ENCODE measurements at regions of chr1 and their contacts with region 1.

Region 1: DNA sequence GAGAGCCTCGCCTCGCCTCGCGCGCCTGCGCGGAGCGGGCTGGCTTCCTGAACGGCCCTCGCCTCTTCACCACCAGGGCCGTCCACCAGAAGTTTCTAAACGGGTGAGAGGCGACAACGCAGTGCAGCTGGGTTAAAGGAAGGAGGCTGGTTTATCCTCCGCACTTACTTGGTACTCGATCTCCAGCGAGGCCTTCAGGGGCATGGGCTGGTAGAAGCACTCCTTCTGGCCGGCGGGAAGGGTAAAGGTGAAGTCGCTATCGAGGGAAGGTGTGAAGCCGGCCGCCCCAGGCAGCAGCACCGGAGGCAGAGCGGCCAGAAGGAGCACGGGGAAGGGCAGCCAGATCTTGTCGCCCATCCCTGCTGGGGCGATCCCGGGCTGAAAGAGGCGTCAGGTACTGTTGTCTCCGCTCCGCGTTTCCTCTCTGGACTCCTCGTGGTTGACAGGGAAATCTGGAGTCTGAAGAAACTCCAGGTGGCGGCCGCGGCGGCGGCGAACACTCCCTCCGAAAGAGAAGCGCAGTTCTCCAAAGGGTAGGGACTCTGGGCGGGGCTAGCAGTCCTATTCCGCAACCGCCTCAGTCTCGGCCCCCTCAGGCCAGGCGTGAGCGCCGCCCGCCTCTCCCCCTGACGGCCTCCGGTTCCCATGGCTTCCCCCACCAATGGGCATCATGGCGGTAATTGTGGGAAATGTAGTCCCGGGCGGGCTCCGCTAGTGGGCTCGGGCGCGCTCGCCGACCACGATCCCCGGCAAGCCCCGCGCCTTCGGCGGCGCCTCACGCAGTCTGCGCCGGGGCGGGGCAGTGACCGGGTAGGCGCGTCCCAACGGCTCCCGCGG is at the start of gene TMED5:
- DNase-seq: peak; percentile 90 to 98 (median 95)
- ATAC-seq: peak; percentile 81
- H3K4me3 ChIP-seq: peak within 1 kb of the TSS; percentile 75 to 97
- H3K4me3 Mint-ChIP-seq: peak within 1 kb of the TSS; percentile 91
- H3K27ac ChIP-seq: peak within 1 kb of the TSS; percentile 83 to 98
- H3K27ac Mint-ChIP-seq: peak within 1 kb of the TSS; percentile 97
- H3K4me1 ChIP-seq: peaks cover 33% of the 10 kb centered on the region
- H3K4me1 Mint-ChIP-seq: peaks cover 49% of the 10 kb centered on the region
- H3K27me3 ChIP-seq: no peaks in the 10 kb centered on the region
- H3K27me3 Mint-ChIP-seq: no peaks in the 10 kb centered on the region
- CTCF ChIP-seq: peak; percentile 32
- total RNA-seq, gene TMED5: 38.3 to 38.8 TPM

Region 2: GRCh38 chr1:92080128-92080985 is 1099.7 kb before region 1 on chr1 and contains the start of gene BTBD8:
- CTCF ChIA-PET with region 1: no interaction called
- POLR2A ChIA-PET with region 1: no interaction called
- intact Hi-C with region 1: loop called in 1 of 2 experiments (anchors 10 kb)
- DNase-seq: peak; percentile 75 to 91 (median 88)
- ATAC-seq: peak; percentile 97
- H3K4me3 ChIP-seq: peak within 1 kb of the TSS; percentile 82 to 88
- H3K4me3 Mint-ChIP-seq: peak within 1 kb of the TSS; percentile 95
- H3K27ac ChIP-seq: peak within 1 kb of the TSS; percentile 60 to 71
- H3K27ac Mint-ChIP-seq: peak within 1 kb of the TSS; percentile 93
- H3K4me1 ChIP-seq: peaks cover 5% of the 10 kb centered on the region
- H3K4me1 Mint-ChIP-seq: peaks cover 13% of the 10 kb centered on the region
- H3K27me3 ChIP-seq: no peaks in the 10 kb centered on the region
- H3K27me3 Mint-ChIP-seq: no peaks in the 10 kb centered on the region
- CTCF ChIP-seq: no peak
- total RNA-seq, gene BTBD8: 0.72 to 1.2 TPM

Region 3: DNA sequence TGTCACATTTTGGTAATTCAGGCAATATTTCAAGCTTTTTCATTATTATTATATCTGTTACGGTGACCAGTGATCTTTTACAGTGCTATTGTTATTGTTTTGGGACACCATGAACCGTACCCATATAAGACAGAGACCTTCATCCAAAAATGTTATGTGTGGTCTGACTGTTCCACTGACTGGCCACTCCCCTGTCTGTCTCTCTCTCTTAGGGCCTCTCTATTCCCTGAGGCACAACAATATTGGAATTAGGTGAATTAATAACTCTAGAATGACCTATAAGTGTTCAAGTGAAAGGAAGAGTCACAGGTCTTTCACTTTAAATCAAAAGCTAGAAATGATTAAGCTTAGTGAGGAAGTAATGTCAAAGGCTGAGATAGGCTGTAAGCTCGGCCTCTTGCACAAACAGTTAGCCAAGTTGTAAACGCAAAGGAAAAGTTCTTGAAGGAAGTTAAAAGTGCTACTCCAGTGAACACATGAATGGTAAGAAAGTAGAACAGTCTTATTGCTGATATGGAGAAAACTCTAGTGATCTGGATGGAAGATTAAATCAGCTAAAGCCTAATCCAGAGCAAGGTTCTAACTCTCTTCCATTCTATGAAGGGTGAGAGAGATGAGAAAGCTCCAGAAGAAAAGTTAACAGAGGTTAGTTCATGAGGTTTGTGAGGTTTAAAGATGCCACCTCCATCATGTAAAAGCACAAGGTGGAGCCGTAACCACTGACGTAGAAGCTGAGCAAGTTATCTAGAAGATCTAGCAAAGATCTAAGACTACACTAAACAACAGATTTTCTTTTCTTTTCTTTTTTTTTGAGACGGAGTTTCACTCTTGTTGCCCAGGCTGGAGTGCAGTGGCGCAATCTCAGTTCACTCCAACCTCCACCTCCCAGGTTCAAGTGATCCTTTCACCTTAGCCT is 199.1 kb before region 1 on chr1:
- CTCF ChIA-PET with region 1: no interaction called
- POLR2A ChIA-PET with region 1: interaction called, 3 read pairs
- intact Hi-C with region 1: loop called in 1 of 2 experiments (anchors 5 kb)
- DNase-seq: peak; percentile 20 to 93 (median 48)
- ATAC-seq: peak; percentile 93
- H3K4me3 ChIP-seq: peak overlapping the region in 1 of 2 experiments; percentile 12
- H3K4me3 Mint-ChIP-seq: peak overlapping the region; percentile 66
- H3K27ac ChIP-seq: peak overlapping the region; percentile 72 to 93
- H3K27ac Mint-ChIP-seq: peak overlapping the region; percentile 96
- H3K4me1 ChIP-seq: peaks cover 23% of the 10 kb centered on the region
- H3K4me1 Mint-ChIP-seq: peaks cover 25% of the 10 kb centered on the region
- H3K27me3 ChIP-seq: no peaks in the 10 kb centered on the region
- H3K27me3 Mint-ChIP-seq: no peaks in the 10 kb centered on the region
- CTCF ChIP-seq: no peak

Region 4: DNA sequence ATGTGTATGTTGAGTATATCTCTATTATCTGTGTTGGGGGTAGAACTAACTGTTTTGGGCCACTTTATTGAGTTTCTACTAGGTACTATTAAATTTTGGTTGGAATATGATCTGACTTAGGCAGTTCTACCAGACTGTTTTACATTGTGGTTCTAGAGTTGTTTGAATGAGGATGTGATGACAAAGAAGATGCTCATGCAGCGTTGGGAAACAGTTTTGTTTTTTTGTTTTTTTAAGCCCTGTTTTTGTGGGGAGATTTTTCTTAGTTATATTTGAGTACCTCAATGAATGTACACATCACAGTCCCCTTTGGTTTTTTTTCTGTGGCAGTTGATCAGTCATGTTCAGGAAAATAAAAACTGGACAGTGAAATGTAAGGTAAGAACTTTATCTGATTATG is 40.0 kb before region 1 on chr1:
- CTCF ChIA-PET with region 1: no interaction called
- POLR2A ChIA-PET with region 1: no interaction called
- intact Hi-C with region 1: loop called in 1 of 2 experiments (anchors 2 kb)
- DNase-seq: no peak
- ATAC-seq: no peak
- H3K4me3 ChIP-seq: no peak overlapping the region
- H3K4me3 Mint-ChIP-seq: no peak overlapping the region
- H3K27ac ChIP-seq: no peak overlapping the region
- H3K27ac Mint-ChIP-seq: no peak overlapping the region
- H3K4me1 ChIP-seq: no peaks in the 10 kb centered on the region
- H3K4me1 Mint-ChIP-seq: peaks cover 3% of the 10 kb centered on the region
- H3K27me3 ChIP-seq: no peaks in the 10 kb centered on the region
- H3K27me3 Mint-ChIP-seq: no peaks in the 10 kb centered on the region
- CTCF ChIP-seq: no peak

Region 5: DNA sequence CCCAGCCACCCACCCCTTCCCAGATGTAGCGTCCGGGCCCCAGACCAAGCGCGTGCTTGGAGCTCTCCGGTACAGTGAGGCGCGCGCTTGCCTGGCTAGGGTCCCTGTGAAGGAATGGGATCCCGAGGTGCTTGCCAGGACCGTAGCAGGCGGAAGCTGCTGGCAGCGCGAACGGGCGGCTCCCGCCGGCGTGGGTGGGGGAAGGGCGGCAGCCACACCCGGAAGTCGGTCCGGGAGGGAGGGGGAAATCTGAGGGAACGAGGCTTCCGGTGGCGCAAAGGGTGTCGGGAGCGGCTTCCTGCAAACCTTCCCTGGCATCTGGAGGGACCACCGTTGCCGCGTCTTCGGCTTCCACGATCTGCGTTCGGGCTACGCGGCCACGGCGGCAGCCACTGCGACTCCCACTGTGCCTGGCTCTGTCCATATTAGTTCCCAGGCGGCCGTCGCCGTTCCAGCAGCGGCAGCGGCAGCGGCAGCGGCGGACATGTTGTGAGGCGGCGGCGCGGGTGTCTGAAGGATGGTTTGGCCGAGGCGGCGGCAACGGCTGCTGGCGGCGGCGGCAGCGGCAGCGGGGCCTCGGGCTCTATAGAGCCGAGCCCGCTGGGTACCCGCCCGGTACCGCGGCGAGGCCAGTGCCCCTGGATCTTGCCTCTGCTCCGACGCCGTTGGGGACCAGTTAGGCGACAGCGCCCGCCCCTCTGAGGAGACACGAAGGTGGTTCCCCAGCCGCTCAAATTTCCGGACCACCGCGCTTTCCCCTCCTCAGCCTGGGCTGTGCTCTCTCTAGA is 165.7 kb after region 1 on chr1 and contains the start of gene DR1:
- CTCF ChIA-PET with region 1: no interaction called
- POLR2A ChIA-PET with region 1: no interaction called
- intact Hi-C with region 1: loop called (anchors 1 to 2 kb)
- DNase-seq: peak; percentile 81 to 94 (median 90)
- ATAC-seq: peak; percentile 74
- H3K4me3 ChIP-seq: peak within 1 kb of the TSS; percentile 80 to 81
- H3K4me3 Mint-ChIP-seq: peak within 1 kb of the TSS; percentile 95
- H3K27ac ChIP-seq: peak within 1 kb of the TSS; percentile 72 to 91
- H3K27ac Mint-ChIP-seq: peak within 1 kb of the TSS; percentile 98
- H3K4me1 ChIP-seq: peaks cover 32% of the 10 kb centered on the region
- H3K4me1 Mint-ChIP-seq: peaks cover 51% of the 10 kb centered on the region
- H3K27me3 ChIP-seq: no peaks in the 10 kb centered on the region
- H3K27me3 Mint-ChIP-seq: no peaks in the 10 kb centered on the region
- CTCF ChIP-seq: no peak
- total RNA-seq, gene DR1: 49.1 to 49.9 TPM

Region 6: DNA sequence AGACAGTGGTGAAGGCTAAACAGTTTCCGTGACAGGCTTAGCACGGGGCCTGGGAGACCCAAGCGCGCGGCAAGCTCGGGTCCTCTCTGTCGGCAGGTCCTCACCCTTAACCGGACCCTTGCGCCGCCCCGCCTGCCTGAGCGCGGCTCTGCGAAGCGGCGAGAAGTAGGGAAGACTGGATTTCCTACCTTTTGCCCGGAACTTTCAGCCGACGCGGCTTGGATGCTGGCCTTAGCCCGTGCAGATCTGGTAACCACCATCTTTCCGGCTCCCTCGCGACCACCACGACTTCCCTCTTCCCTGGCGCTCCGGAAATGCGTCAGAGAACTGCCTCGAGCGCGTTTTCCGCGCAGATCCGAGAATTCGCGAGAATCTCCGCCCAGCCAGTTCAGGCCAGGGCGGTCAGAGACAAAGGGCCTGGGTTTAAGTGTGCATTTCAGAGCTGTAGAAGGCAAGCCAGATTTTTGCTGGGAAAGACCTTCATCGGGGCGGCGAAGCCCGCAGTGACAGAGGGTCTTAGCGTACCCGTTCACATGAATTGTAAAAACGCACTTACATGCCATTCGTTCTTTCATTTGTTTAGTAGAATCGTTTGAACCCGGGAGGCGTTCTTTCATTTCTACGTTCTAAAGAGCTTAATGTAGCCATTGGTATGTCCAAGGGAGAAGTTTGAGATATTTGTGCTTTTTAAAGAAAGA is 698.9 kb after region 1 on chr1 and contains the start of gene DNTTIP2:
- CTCF ChIA-PET with region 1: no interaction called
- POLR2A ChIA-PET with region 1: no interaction called
- intact Hi-C with region 1: loop called (anchors 1 to 10 kb)
- DNase-seq: peak; percentile 74 to 95 (median 88)
- ATAC-seq: peak; percentile 81
- H3K4me3 ChIP-seq: peak within 1 kb of the TSS; percentile 87 to 99
- H3K4me3 Mint-ChIP-seq: peak within 1 kb of the TSS; percentile 95
- H3K27ac ChIP-seq: peak within 1 kb of the TSS; percentile 95 to 99
- H3K27ac Mint-ChIP-seq: peak within 1 kb of the TSS; percentile 98
- H3K4me1 ChIP-seq: peaks cover 32% of the 10 kb centered on the region
- H3K4me1 Mint-ChIP-seq: peaks cover 46% of the 10 kb centered on the region
- H3K27me3 ChIP-seq: no peaks in the 10 kb centered on the region
- H3K27me3 Mint-ChIP-seq: no peaks in the 10 kb centered on the region
- CTCF ChIP-seq: no peak
- total RNA-seq, gene DNTTIP2: 126 to 130 TPM

Region 7: DNA sequence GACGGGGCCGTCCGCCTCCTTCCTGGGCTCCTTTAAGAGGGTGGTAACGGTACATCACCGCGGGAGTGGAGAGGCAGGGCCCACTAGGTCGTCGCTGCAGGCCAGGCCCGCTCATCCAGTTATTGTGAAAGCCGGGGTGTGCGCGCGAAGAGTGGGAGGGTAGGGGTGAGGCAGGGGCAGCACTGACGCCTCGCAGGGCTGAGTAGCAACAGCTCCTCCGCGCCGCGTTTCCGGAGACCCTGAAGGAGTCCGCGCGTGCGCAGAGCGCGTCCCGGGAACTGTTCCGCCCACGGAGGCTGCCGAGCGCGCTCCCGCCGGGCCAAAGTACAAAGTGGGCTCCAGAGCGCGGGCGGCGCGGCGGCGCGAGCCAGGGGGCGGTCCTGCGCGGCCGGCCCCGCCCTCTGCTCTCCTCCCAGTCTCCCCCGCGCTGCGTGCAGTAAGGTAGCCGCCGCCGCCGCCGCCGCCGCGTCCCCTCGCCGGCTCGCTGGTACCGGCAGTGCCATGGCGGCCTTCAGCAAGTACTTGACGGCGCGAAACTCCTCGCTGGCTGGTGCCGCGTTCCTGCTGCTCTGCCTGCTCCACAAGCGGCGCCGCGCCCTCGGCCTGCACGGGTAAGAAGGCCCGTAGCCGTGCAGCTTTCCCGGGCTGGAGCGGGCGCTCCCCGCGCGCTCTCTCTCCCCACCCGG is 1238.0 kb after region 1 on chr1 and contains the start of gene ABCD3:
- CTCF ChIA-PET with region 1: no interaction called
- POLR2A ChIA-PET with region 1: no interaction called
- intact Hi-C with region 1: loop called in 1 of 2 experiments (anchors 5 kb)
- DNase-seq: peak; percentile 93 to 99 (median 97)
- ATAC-seq: peak; percentile 91
- H3K4me3 ChIP-seq: peak within 1 kb of the TSS; percentile 63 to 81
- H3K4me3 Mint-ChIP-seq: no peak within 1 kb of the TSS
- H3K27ac ChIP-seq: peak within 1 kb of the TSS; percentile 67 to 85
- H3K27ac Mint-ChIP-seq: peak within 1 kb of the TSS; percentile 85
- H3K4me1 ChIP-seq: peaks cover 27% of the 10 kb centered on the region
- H3K4me1 Mint-ChIP-seq: peaks cover 42% of the 10 kb centered on the region
- H3K27me3 ChIP-seq: no peaks in the 10 kb centered on the region
- H3K27me3 Mint-ChIP-seq: peaks cover 2% of the 10 kb centered on the region
- CTCF ChIP-seq: no peak
- total RNA-seq, gene ABCD3: 17.9 to 18.1 TPM